Activated T-helper 1 cell treated with anti-CD3 and anti-CD28 coated beads, Interleukin-12 subunit alpha, Interleukin-12 subunit beta, Interleukin-2, Interleukin-4 antibody, amounts not matched to agents 30 ng/mL and 10 ng/mL and 1 ng/mL, durations not matched to agents 14 hours and 24 hours and 36 hours (primary cell): ENCODE measurements at regions of chr13 and their contacts with region 1.

Region 1: DNA sequence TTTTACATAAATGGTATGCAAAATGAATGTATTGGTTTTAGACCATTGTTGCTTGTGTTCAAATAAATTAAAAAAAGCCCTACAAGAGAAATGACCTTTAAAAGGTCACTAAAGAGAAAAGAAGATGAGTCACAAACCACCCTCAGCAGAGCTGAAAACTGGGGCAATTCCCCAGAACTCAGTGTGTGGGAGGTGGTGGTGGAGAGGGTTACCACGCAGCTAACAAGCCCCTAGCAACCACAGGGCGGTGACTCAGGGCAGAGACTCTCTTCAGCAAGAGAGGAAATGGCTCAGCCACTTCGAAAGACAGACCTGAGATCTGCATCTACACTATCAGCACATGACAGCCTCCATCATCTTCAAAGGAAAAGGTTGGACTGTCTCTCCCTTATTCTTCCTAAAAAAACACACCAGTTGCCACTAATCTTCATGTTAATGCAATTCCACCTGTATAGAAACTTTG is 29.4 kb upstream of the NDFIP2 start:
- DNase-seq: peak; percentile 89
- H3K4me3 Mint-ChIP-seq: peak overlapping the region; percentile 78
- H3K27ac Mint-ChIP-seq: peak overlapping the region; percentile 98
- H3K4me1 Mint-ChIP-seq: peaks cover 92% of the 10 kb centered on the region
- H3K27me3 Mint-ChIP-seq: no peaks in the 10 kb centered on the region

Region 2: GRCh38 chr13:77599351-77599750 is 1852.2 kb before region 1 on chr13:
- intact Hi-C with region 1: no loop called
- DNase-seq: no peak
- H3K4me3 Mint-ChIP-seq: no peak overlapping the region
- H3K27ac Mint-ChIP-seq: no peak overlapping the region
- H3K4me1 Mint-ChIP-seq: no peaks in the 10 kb centered on the region
- H3K27me3 Mint-ChIP-seq: peaks cover 21% of the 10 kb centered on the region

Region 3: DNA sequence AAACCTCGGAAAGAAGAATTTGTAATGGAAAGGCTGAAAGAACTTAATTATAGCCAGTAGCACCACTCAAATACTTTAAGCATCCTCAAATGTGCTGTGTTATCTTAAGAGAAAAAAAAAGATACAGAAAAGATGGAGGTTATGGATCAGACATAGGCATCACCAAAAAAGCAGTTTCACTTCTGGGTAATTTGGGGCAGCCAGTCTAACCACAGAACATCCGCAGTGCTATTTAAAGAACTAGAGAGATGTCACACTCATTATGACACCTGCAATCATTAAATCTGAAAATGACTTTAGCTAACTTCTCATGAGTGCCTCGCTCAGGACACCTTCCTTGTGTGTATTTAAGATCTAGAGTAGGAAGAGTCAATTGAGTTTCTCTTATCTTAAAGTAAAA is 257.3 kb before region 1 on chr13:
- intact Hi-C with region 1: loop called (anchors 1 kb)
- DNase-seq: peak; percentile 62
- H3K4me3 Mint-ChIP-seq: peak overlapping the region; percentile 60
- H3K27ac Mint-ChIP-seq: peak overlapping the region; percentile 22
- H3K4me1 Mint-ChIP-seq: peaks cover 56% of the 10 kb centered on the region
- H3K27me3 Mint-ChIP-seq: no peaks in the 10 kb centered on the region

Region 4: DNA sequence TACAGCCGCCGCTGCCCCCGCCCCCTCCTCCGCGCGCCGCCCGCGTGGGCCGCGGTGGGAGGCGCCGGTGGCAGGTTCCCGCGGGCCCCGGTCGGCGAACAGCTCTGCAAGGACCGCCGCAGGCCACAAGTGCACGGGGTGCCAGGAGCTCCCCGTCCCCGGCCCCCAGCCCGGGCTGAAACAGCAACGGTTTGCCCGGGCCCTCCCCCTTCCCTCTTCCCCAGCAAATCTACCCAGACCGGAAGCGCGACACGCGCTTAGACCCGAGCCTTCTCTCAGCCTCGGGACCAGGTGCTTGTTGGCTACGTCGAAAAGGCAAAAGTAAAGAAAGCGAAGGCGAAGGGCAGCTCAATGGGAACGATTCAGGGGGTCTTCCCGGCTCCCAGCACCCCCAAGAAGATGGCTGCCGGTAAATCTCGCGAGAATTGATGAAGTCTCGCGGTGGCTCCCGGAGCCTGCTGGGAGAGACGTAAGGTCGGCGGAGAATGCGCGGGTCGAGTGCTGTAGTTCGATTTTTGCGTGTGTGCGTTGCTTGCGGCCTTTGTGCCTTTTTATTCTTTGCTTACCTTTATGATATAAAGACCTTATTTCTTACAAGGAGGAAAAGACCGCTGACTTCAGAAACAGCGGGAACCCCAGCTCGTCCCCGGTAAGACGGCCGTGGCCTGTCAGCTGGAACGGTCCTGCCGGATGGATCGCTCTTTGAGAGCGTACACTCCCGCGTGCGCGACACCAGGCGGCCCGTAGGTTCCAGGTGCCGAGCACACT is 45.5 kb before region 1 on chr13 and contains the start of gene RBM26:
- intact Hi-C with region 1: loop called (anchors 1 kb)
- DNase-seq: peak; percentile 90
- H3K4me3 Mint-ChIP-seq: peak within 1 kb of the TSS; percentile 92
- H3K27ac Mint-ChIP-seq: peak within 1 kb of the TSS; percentile 97
- H3K4me1 Mint-ChIP-seq: peaks cover 24% of the 10 kb centered on the region
- H3K27me3 Mint-ChIP-seq: no peaks in the 10 kb centered on the region
- total RNA-seq, gene RBM26: 99.3 and 107 TPM in 2 replicates

Region 5: GRCh38 chr13:79429309-79429708 is 22.2 kb before region 1 on chr13:
- intact Hi-C with region 1: loop called (anchors 1 kb)
- DNase-seq: no peak
- H3K4me3 Mint-ChIP-seq: no peak overlapping the region
- H3K27ac Mint-ChIP-seq: no peak overlapping the region
- H3K4me1 Mint-ChIP-seq: peaks cover 60% of the 10 kb centered on the region
- H3K27me3 Mint-ChIP-seq: no peaks in the 10 kb centered on the region

Region 6: DNA sequence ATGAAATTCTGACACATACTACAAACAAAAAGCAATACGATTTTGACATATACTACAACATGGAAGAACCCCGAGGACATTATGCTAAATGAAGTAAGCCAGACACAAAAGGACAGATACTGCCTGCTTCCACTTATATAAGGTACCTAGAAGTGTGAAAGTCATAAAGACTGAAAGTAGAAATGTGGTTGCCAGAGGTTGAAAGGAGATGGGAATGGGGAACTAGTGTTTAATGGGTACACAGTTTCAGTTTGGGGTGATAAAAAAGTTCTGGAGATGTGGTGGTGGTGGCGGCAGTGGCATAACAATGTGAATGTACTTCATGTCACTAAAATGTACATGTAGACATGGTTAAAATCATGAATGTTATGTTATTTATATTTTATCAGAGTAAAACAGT is 17.3 kb after region 1 on chr13:
- intact Hi-C with region 1: loop called (anchors 1 kb)
- DNase-seq: no peak
- H3K4me3 Mint-ChIP-seq: no peak overlapping the region
- H3K27ac Mint-ChIP-seq: peak overlapping the region; percentile 0
- H3K4me1 Mint-ChIP-seq: peaks cover 26% of the 10 kb centered on the region
- H3K27me3 Mint-ChIP-seq: no peaks in the 10 kb centered on the region